ENCODE measurements at regions of chr7 and their contacts with region 1.

Region 1: GRCh38 chr7:47254081-47255006 is 327.6 kb downstream of the TNS3 start:
- DNase-seq: peak; percentile 90
- H3K4me3 Mint-ChIP-seq: peak overlapping the region; percentile 69
- H3K27ac Mint-ChIP-seq: peak overlapping the region; percentile 32
- H3K4me1 Mint-ChIP-seq: peaks cover 9% of the 10 kb centered on the region
- H3K27me3 Mint-ChIP-seq: peaks cover 32% of the 10 kb centered on the region
- CTCF ChIP-seq: peak; percentile 99

Region 2: DNA sequence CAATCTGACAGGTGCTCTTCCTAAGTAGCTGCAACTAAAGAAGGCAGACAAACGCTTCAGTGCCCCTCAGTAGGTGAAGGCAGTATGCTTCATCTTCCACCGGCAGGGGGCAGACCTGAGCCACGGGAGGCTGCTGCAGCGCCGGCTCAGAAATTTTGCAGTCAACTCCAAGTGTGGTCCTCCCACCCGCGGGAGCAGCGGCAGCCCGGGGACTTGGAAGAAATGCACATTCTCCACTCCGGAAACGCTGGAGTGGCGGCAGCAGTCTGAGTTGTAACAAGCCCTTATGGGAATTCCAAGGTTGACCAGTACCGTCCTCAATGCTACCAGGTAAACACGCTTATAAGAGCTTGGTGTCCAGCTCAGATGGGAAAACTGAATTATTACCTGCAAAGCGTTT is 1336.7 kb before region 1 on chr7:
- CTCF ChIA-PET with region 1: no interaction called
- intact Hi-C with region 1: loop called (anchors 10 kb)
- DNase-seq: peak; percentile 97
- H3K4me3 Mint-ChIP-seq: peak overlapping the region; percentile 99
- H3K27ac Mint-ChIP-seq: peak overlapping the region; percentile 8
- H3K4me1 Mint-ChIP-seq: peaks cover 26% of the 10 kb centered on the region
- H3K27me3 Mint-ChIP-seq: no peaks in the 10 kb centered on the region
- CTCF ChIP-seq: peak; percentile 97

Region 3: GRCh38 chr7:47195641-47196040 is 58.7 kb before region 1 on chr7:
- CTCF ChIA-PET with region 1: no interaction called
- intact Hi-C with region 1: loop called (anchors 5 kb)
- DNase-seq: no peak
- H3K4me3 Mint-ChIP-seq: no peak overlapping the region
- H3K27ac Mint-ChIP-seq: no peak overlapping the region
- H3K4me1 Mint-ChIP-seq: peaks cover 17% of the 10 kb centered on the region
- H3K27me3 Mint-ChIP-seq: peaks cover 28% of the 10 kb centered on the region
- CTCF ChIP-seq: no peak

Region 4: GRCh38 chr7:47428092-47428767 is 173.9 kb after region 1 on chr7:
- CTCF ChIA-PET with region 1: no interaction called
- intact Hi-C with region 1: no loop called
- DNase-seq: no peak
- H3K4me3 Mint-ChIP-seq: no peak overlapping the region
- H3K27ac Mint-ChIP-seq: no peak overlapping the region
- H3K4me1 Mint-ChIP-seq: peaks cover 12% of the 10 kb centered on the region
- H3K27me3 Mint-ChIP-seq: no peaks in the 10 kb centered on the region
- CTCF ChIP-seq: no peak

Measured in Calu3 (cell line).